ENCODE measurements at regions of chrX and their contacts with region 1.

Region 1: GRCh38 chrX:134423615-134424014 is 36.4 kb upstream of the HPRT1 start:
- DNase-seq: no peak
- H3K4me3 ChIP-seq: no peak overlapping the region
- H3K27ac ChIP-seq: no peak overlapping the region
- H3K4me1 ChIP-seq: no peaks in the 10 kb centered on the region
- H3K27me3 ChIP-seq: no peaks in the 10 kb centered on the region
- CTCF ChIP-seq: peak; percentile 71

Region 2: DNA sequence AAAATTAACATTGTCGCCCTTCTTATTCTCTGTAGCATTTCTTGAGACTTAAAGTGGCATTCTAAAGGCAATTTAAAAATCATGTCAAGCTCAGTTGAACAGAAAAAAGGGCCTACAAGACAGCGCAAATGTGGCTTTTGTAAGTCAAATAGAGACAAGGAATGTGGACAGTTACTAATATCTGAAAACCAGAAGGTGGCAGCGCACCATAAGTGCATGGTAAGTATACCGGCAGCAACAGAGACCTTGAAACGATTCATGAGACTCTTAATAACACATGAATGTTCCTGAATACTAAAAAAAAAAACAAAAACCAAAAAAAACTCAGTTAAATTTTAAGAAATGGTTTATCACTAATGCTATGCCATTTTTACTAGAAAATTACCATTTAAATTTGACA is 46.1 kb before region 1 on chrX:
- CTCF ChIA-PET with region 1: no interaction called
- POLR2A ChIA-PET with region 1: no interaction called
- intact Hi-C with region 1: no loop called
- DNase-seq: no peak
- H3K4me3 ChIP-seq: no peak overlapping the region
- H3K27ac ChIP-seq: no peak overlapping the region
- H3K4me1 ChIP-seq: peaks cover 15% of the 10 kb centered on the region
- H3K27me3 ChIP-seq: no peaks in the 10 kb centered on the region
- CTCF ChIP-seq: peak; percentile 41

Region 3: DNA sequence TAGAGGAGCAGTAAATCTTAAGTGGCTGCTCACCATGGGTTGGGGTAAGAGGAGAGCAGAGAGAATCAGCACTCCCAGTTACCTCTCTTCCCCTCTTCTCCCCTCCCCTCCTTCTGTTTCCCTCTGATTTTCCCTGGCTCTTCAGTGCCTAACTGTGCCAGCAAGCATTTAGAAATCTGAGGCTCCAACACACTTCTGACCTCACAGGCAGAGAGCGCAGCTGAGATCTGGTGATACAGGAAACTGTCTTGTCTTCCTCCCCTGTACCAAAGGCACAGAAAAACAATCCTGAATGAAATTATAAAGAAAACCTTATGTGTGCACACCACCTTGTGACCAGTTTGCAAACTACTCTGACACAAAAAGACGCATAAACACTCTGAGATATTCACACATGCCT is 484.7 kb after region 1 on chrX:
- CTCF ChIA-PET with region 1: no interaction called
- POLR2A ChIA-PET with region 1: no interaction called
- intact Hi-C with region 1: loop called (anchors 10 kb)
- DNase-seq: no peak
- H3K4me3 ChIP-seq: no peak overlapping the region
- H3K27ac ChIP-seq: no peak overlapping the region
- H3K4me1 ChIP-seq: peaks cover 2% of the 10 kb centered on the region; the same call in 1 of the 2 replicates
- H3K27me3 ChIP-seq: no peaks in the 10 kb centered on the region
- CTCF ChIP-seq: peak; percentile 53

Region 4: DNA sequence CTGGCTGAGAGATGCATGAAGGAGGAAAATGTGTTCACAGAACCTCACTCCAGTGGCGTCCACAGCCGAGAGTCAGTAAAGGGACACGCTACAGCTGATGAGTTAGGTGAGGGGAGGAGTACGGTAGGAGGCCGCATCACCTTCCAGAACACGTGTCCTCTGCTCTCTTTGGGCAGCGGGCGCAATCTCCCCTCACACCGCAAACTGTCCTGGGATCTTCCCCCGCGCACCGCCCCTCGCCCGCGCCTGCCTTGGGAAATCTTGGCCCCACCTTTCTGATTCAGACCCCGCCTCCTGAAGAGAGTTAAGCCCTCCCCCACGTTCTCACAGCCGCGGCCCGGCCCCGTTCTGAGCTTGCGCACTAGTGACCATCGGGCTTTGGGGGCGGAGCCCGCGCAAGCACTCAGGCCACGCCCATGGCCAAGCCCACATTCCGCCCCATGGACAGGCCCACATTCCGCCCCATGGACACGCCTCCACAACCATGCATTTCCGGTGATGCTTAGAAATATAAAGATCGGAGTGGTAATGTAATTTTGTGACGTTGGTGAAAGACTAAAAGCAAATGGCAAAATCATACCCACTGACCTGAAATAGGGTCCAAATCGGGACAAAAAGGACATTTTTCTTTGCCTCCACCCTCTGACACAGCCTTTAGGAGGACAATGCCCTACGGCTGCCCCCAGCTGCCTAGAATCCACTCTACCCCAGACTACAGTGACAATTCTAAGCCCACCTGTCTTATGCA is 580.4 kb after region 1 on chrX:
- CTCF ChIA-PET with region 1: no interaction called
- POLR2A ChIA-PET with region 1: no interaction called
- intact Hi-C with region 1: loop called (anchors 5 kb)
- DNase-seq: peak; percentile 84 to 98
- H3K4me3 ChIP-seq: peak overlapping the region; percentile 65
- H3K27ac ChIP-seq: peak overlapping the region; percentile 39
- H3K4me1 ChIP-seq: peaks cover 35% of the 10 kb centered on the region
- H3K27me3 ChIP-seq: no peaks in the 10 kb centered on the region
- CTCF ChIP-seq: no peak

Region 5: GRCh38 chrX:135185795-135186443 is 762.3 kb after region 1 on chrX:
- CTCF ChIA-PET with region 1: no interaction called
- POLR2A ChIA-PET with region 1: no interaction called
- intact Hi-C with region 1: no loop called
- DNase-seq: peak; percentile 37 to 38
- H3K4me3 ChIP-seq: no peak overlapping the region
- H3K27ac ChIP-seq: no peak overlapping the region
- H3K4me1 ChIP-seq: no peaks in the 10 kb centered on the region
- H3K27me3 ChIP-seq: peaks cover 72% of the 10 kb centered on the region
- CTCF ChIP-seq: peak; percentile 71

Measured in PC-9 (cell line).